ENCODE measurements at regions of chr12 and their contacts with region 1.

Region 1: DNA sequence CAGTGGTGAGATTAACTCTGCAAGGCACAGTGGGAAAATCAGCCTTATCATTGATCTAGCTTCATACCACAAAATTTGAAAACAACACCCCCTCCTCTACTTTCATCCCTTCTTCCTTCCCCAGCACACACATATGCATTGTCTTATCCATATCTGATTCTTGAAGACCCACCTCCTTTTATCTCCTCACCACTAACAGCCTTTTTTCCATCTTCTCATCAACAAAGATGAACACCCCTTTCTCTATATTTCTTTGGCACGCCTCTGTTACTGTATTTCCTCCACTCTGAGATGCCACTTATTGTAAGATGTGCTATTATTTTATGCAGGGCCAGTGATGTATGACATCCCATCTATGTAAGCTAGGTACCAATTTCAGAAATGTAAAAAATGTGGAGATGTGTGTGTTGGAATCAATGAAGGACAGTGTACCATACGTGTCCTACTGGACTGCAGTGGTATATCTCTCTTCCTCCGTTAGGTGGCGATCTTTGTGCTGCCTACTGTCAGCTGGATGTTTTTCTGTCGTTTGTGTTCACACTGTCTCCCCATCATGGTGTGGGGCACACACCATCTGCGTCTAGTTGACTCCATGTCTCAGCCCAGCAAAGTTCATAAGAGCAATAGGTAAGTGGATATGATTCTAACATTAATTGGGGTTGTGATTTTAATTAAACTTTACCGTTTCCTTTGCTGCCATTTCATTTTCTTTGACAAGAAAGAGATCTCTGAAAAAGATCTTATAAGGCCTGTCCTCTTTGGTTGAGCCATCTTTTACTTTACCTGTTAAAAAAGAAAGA is 24.0 kb downstream of the CCDC38 start:
- DNase-seq: peak; percentile 70
- H3K4me3 ChIP-seq: no peak overlapping the region
- H3K27ac ChIP-seq: no peak overlapping the region
- H3K4me1 ChIP-seq: peaks cover 0 to 2% of the 10 kb centered on the region in 2 experiments; a peak in 1 of 4 replicates
- H3K27me3 ChIP-seq: peaks cover 6% of the 10 kb centered on the region; the same call in 1 of the 2 replicates
- CTCF ChIP-seq: peak; percentile 82
- EP300 ChIP-seq: no peak
- RAD21 ChIP-seq: peak; percentile 92

Region 2: GRCh38 chr12:95942524-95943329 is 24.3 kb after region 1 on chr12 and contains the start of gene CCDC38:
- CTCF ChIA-PET with region 1: interaction called, 40 read pairs
- POLR2A ChIA-PET with region 1: no interaction called
- DNase-seq: peak; percentile 98
- H3K4me3 ChIP-seq: peak within 1 kb of the TSS; percentile 69 to 76
- H3K27ac ChIP-seq: peak within 1 kb of the TSS in 1 of 2 experiments; percentile 97; a peak in 2 of 4 replicates
- H3K4me1 ChIP-seq: peaks cover 0 to 7% of the 10 kb centered on the region in 2 experiments; a peak in 2 of 4 replicates
- H3K27me3 ChIP-seq: no peaks in the 10 kb centered on the region
- CTCF ChIP-seq: no peak
- EP300 ChIP-seq: 0 out of 4 replicates have a peak, but pooled peaks of 1 of the 2 experiments have one; percentile 32
- RAD21 ChIP-seq: no peak
- polyA plus RNA-seq, gene CCDC38: not detected in 2 replicates

Region 3: DNA sequence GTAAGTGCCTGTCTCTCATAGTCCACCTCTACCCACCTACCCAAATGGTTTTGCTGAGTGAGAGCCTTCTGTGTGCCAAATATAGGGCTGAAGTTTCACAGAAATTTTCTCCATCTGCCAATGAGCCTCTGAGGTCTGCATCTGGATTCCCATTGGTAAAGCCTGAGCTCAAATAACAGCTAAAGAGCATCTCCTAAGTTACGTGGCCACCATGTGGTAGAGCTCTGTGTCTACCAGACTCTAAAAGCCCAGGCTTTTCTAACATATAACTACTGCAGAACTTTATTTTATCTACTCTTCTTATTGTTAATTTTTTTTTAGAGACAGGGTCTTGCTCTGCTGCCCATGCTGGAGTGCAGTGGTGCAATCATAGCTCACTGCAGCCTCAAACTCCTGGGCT is 40.7 kb after region 1 on chr12:
- CTCF ChIA-PET with region 1: interaction called, 105 read pairs
- POLR2A ChIA-PET with region 1: no interaction called
- DNase-seq: peak; percentile 53
- H3K4me3 ChIP-seq: no peak overlapping the region
- H3K27ac ChIP-seq: no peak overlapping the region
- H3K4me1 ChIP-seq: no peaks in the 10 kb centered on the region
- H3K27me3 ChIP-seq: no peaks in the 10 kb centered on the region
- CTCF ChIP-seq: peak; percentile 39
- EP300 ChIP-seq: no peak
- RAD21 ChIP-seq: peak; percentile 73

Region 4: DNA sequence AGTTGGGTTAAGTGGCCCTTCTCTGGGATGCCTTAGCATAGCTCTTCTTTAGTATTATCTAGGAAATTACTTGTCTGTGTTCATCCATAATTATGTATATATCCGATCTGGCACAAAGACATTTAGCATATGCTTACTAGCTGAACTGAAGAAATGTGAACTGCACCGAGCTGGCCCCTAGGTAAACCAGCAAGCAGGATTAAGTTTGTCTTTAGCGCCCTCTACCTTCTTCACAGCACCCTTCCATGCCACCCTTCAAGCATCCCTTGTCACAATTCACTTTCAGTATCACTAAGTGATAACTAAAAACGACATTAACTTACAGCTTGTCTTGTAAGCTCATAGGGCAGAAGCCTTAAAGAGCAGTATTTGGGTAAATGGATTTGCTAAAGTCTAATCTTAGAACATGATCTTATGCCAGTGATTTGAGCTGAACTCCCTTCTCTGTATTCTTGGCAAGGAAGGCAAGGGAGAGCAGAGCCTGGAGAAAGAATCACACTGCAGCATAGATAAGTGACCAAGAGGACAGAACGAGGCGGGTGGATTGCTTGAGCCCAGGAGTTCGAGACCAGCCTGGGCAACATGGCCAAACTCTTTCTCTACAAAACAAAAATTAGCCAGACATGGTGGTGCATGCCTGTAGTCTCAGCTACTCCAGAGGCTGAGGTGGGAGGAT is 80.4 kb after region 1 on chr12:
- CTCF ChIA-PET with region 1: interaction called, 154 read pairs
- POLR2A ChIA-PET with region 1: interaction called, 3 read pairs
- DNase-seq: peak; percentile 75
- H3K4me3 ChIP-seq: no peak overlapping the region; a peak in 1 of 4 replicates
- H3K27ac ChIP-seq: no peak overlapping the region
- H3K4me1 ChIP-seq: no peaks in the 10 kb centered on the region
- H3K27me3 ChIP-seq: no peaks in the 10 kb centered on the region
- CTCF ChIP-seq: peak; percentile 64
- EP300 ChIP-seq: no peak
- RAD21 ChIP-seq: peak; percentile 89

Region 5: DNA sequence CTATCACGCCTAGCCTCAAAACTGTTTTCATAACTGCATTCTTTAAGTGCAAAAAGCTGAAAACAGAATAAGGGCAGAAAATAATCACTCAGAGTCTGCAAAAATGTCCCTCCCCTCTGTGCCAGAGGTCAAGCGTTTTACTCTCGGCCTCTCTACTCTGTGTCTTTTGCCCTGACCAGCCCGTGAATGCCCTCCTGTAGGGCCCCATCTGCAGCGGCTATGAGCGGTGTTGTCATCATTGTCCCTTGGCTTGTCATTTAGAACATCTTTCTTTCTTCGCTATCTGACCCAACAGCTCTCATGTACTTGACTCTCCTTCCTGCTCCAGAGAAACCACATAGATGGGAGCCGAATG is 297.5 kb after region 1 on chr12:
- CTCF ChIA-PET with region 1: interaction called, 10 read pairs
- POLR2A ChIA-PET with region 1: no interaction called
- DNase-seq: no peak
- H3K4me3 ChIP-seq: no peak overlapping the region
- H3K27ac ChIP-seq: no peak overlapping the region; a peak in 1 of 4 replicates
- H3K4me1 ChIP-seq: peaks cover 11 to 17% of the 10 kb centered on the region in 2 experiments
- H3K27me3 ChIP-seq: no peaks in the 10 kb centered on the region
- CTCF ChIP-seq: no peak
- EP300 ChIP-seq: no peak
- RAD21 ChIP-seq: no peak